ENCODE measurements at regions of chr1 and their contacts with region 1.

Region 1: DNA sequence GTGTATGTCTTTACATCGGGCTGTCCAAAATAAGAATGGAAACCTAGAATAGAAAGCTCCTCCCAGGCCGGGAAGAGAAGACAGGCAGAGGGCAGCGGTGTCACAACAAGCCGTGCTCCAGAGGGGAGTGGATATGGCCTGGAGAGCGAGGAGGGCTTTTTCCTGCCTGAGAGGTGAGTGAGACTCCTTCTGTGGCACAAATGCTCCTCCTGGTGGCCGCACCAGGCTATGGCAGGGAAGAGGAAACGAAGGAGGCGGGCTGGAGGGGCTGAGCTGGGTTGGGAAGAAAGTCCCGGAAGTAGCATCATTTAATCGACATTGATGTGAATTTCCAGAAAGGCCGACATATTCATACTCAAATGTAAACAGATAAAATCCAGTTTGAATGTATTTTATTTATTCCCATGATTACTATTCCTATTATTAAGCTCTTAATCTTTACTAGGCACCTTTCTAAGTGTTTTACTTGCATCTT is 54.7 kb downstream of the MEF2D start:
- DNase-seq: peak; percentile 90
- H3K4me3 Mint-ChIP-seq: no peak overlapping the region
- H3K27ac Mint-ChIP-seq: no peak overlapping the region
- H3K4me1 Mint-ChIP-seq: peaks cover 16% of the 10 kb centered on the region
- H3K27me3 Mint-ChIP-seq: peaks cover 47% of the 10 kb centered on the region

Region 2: DNA sequence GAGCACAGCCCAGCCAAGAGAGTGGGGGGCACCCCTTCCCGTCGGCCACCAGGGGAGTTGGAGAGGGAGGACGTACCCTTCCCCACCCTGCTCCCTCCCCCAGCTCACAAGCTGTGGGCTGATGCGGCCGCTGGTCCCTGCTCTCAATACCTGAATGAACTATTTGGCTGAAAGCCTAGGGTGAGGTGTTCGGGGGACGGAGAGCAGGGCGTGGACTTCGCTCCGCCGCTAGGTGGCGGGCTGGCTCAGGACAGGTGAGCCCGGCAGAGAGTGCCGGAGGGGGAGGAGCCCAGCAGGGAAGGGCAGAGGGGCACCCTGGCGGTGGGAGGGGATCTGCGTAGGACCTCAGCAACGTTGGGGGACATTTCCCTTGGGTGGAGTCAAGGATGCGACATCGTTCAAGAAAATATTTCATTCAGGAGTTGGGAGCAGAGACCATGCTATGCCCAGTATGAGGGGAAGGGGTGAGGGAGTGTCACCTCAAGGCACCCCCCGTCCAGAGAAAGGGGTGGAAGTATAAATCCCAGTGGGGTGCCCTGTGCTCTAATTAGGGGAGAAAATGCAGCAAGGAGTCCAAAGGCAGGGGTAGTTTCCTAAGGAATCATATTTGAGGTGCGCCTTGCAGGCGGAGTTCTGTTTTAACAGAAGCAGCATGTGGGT is 88.8 kb before region 1 on chr1:
- CTCF ChIA-PET with region 1: interaction called, 23 read pairs
- POLR2A ChIA-PET with region 1: no interaction called
- intact Hi-C with region 1: no loop called
- DNase-seq: peak; percentile 70
- H3K4me3 Mint-ChIP-seq: no peak overlapping the region
- H3K27ac Mint-ChIP-seq: no peak overlapping the region
- H3K4me1 Mint-ChIP-seq: peaks cover 14% of the 10 kb centered on the region
- H3K27me3 Mint-ChIP-seq: peaks cover 11% of the 10 kb centered on the region

Region 3: DNA sequence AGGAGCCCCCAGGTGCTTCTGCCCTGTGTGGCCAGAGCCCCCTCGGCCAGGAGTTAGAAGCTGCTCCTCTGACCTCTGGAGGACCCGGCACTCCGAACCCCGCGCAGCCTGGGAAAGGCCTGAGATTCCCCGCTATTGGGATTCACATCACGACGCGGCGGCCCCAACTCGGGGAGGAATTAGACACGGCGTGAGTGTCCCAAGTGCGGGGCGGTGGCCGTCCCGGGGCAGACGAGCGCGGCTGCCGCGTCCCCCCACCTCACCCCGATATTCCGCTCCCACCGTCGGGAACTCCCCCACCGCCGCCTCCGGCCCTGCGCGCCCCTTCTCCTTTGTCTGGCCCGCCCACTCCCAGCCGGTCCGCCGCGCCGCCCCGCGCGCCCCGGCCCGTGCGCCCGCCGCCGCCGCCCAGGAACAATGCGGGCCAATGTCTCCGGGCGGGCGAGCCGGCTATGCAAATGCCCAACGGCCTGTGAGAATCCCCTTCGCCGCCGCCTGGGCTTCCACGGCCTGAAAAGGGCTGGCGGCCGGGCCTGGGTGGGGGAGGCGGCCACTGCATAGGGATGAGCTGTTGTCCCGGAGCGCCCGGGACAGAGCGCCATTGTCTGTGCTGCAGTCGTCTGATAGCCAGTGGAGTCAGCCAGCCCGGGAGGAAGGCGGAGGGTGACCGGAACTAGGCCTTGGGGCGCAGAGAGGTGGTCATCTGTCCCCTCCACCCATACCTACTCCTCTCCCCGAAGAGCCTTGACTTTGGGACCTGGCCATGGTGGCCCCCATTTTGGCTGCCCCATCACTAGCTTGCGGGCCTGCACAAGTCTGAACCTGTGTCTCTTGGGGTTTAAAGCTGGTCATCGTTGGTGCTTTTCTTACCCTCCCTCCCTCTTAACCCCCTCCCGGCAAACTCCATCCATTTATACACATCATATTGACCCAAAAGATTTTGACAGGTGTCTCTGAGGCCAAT is 57.4 kb before region 1 on chr1:
- CTCF ChIA-PET with region 1: interaction called, 491 read pairs
- POLR2A ChIA-PET with region 1: interaction called, 8 read pairs
- intact Hi-C with region 1: loop called (anchors 1 kb)
- DNase-seq: no peak
- H3K4me3 Mint-ChIP-seq: no peak overlapping the region
- H3K27ac Mint-ChIP-seq: no peak overlapping the region
- H3K4me1 Mint-ChIP-seq: peaks cover 4% of the 10 kb centered on the region
- H3K27me3 Mint-ChIP-seq: peaks cover 26% of the 10 kb centered on the region

Region 4: DNA sequence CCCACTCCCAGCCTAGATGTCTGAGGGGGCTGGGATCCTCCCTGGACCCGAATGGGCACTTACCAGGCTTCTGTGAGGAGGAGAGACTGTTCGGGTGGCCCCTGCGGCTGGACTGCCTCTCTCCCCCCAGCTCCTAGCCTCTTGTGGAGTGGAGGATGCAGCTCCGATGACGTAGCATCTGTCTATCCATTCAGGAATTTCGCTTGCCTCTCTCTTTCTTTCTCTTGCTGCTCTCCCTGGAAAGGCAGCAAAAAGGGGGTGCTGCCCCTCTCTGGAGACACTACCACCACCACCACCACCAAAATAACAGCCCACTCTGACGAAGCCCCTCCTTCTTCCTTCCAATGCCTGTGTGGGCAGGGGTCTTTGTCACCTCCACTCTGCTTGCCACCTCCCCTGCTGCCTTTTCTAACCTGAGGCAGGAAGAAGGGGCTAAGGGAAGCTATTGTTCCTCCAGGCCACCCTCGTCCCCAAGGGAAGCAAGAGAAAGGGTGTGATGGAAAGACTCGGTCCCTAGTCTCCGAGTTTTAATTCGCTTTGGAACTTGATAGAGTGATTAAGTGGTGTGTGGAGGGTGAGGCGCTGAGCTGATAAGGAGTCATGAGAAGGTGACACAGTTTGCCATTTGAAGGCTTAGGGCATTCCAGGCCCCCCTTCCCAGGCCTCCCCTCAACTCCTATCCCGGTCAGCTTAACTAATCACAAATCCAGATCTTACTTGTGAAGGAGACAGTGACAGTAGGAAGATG is 16.3 kb before region 1 on chr1:
- CTCF ChIA-PET with region 1: interaction called, 27 read pairs
- POLR2A ChIA-PET with region 1: interaction called, 3 read pairs
- intact Hi-C with region 1: no loop called
- DNase-seq: no peak
- H3K4me3 Mint-ChIP-seq: no peak overlapping the region
- H3K27ac Mint-ChIP-seq: no peak overlapping the region
- H3K4me1 Mint-ChIP-seq: peaks cover 10% of the 10 kb centered on the region
- H3K27me3 Mint-ChIP-seq: peaks cover 79% of the 10 kb centered on the region

Region 5: DNA sequence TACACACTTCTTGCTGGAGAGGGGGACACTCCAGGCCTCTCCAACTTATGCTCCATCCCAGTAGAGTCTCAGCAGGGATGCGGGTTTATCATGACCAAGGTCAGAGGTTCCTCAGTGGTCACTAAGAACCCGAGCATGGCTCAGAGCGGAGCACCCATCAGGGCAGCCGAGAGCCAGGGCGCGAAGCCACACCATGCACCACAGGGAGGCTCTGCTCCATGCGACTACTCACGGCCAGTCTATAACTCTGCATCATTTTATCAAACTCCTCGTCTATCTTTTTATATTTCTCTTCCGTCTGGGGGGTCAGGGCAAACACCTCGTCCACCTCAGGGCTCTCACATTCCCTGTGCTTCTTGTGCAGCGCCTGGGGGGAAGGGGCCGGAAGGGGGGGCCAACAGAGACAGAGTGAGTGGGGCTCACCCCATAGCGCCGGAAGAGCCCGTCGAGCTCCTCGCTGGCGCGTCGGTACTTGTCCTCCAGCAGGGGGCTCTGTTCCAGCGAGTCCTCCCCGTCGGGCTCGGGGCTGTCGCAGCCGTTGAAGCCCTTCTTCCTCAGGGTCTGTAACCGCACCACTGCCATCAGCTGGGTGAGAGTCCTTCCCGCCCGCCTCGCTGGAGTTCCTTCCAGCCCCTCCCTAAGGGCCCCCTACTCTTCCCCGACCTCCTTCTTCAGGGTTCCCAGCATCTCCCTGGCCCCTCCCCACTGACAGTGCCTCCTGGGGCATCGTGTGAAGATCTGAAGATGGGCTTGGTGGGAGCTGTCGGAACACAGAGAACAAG is 34.8 kb after region 1 on chr1:
- CTCF ChIA-PET with region 1: interaction called, 12 read pairs
- POLR2A ChIA-PET with region 1: no interaction called
- intact Hi-C with region 1: no loop called
- DNase-seq: peak; percentile 83
- H3K4me3 Mint-ChIP-seq: peak overlapping the region; percentile 39
- H3K27ac Mint-ChIP-seq: peak overlapping the region; percentile 79
- H3K4me1 Mint-ChIP-seq: peaks cover 66% of the 10 kb centered on the region
- H3K27me3 Mint-ChIP-seq: no peaks in the 10 kb centered on the region

Measured in activated CD4-positive, alpha-beta memory T cell treated with anti-CD3 and anti-CD28 coated beads for 36 hours (primary cell).